HCT116 (cell line): ENCODE measurements at regions of chr3 and their contacts with region 1.

Region 1: DNA sequence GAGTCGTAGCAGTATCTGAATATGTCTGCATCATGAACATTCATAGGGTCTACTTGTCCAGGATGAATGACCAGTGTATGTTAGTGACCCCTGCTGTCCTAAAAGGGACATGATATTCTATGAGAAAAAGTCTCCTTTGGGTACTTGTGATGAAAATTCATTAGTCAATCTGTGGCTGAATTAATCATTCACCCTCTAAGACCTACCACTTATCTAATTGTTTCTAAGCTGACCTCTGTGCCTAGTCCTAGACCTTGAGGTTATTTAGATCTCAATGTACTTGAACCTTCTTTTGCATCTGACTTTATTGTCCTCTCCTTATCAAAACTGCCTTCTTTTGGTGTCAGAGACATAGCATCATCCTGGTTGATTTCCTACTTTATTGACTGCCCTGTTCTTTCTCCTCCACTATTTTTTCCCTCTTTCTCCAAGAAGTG is 799.3 kb downstream of the DIPK2A start:
- DNase-seq: peak; percentile 24
- ATAC-seq: peak; percentile 72
- H3K4me3 ChIP-seq: no peak overlapping the region
- H3K27ac ChIP-seq: no peak overlapping the region
- H3K4me1 ChIP-seq: no peaks in the 10 kb centered on the region
- H3K27me3 ChIP-seq: no peaks in the 10 kb centered on the region
- CTCF ChIP-seq: peak; percentile 24 to 48 (median 36); a peak in 4 of 6 replicates
- POLR2A ChIP-seq: no peak
- RAD21 ChIP-seq: peak; percentile 65

Region 2: DNA sequence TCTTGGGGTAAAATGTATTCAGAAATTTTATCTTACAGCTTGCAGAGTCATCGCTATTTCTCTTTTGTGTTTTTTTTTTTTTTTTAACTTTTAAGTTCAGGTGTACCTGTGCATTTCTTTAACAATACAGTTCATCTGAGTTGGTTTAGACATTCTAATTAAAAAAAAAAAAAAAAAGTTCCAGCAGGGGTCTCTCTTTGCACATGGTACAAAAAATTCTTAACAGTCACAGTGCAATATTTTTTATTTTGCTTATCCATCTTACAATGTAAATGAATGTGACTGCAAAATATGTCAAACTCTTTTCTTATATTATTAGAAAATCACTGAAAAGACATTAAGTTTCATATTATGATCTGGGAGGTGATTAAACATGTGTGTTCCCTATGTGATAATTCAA is 875.1 kb before region 1 on chr3:
- CTCF ChIA-PET with region 1: no interaction called
- POLR2A ChIA-PET with region 1: no interaction called
- RAD21 ChIA-PET with region 1: no interaction called
- intact Hi-C with region 1: loop called (anchors 5 kb)
- DNase-seq: no peak
- ATAC-seq: 0 out of 2 replicates have a peak, but pooled peaks have one; percentile 30
- H3K4me3 ChIP-seq: no peak overlapping the region
- H3K27ac ChIP-seq: no peak overlapping the region
- H3K4me1 ChIP-seq: no peaks in the 10 kb centered on the region
- H3K27me3 ChIP-seq: no peaks in the 10 kb centered on the region
- CTCF ChIP-seq: peak in 2 of 3 experiments; percentile 28 to 39; a peak in 3 of 6 replicates
- POLR2A ChIP-seq: no peak
- RAD21 ChIP-seq: peak; percentile 56

Region 3: GRCh38 chr3:143972505-143973255 is 798.3 kb before region 1 on chr3:
- CTCF ChIA-PET with region 1: interaction called, 4 read pairs
- POLR2A ChIA-PET with region 1: interaction called, 3 read pairs
- RAD21 ChIA-PET with region 1: no interaction called
- intact Hi-C with region 1: loop called (anchors 2 kb)
- DNase-seq: peak; percentile 15
- ATAC-seq: peak; percentile 28
- H3K4me3 ChIP-seq: peak overlapping the region; percentile 82 to 91
- H3K27ac ChIP-seq: peak overlapping the region; percentile 90
- H3K4me1 ChIP-seq: peaks cover 7 to 17% of the 10 kb centered on the region in 2 experiments; a peak in 3 of 4 replicates
- H3K27me3 ChIP-seq: no peaks in the 10 kb centered on the region
- CTCF ChIP-seq: peak; percentile 27 to 43 (median 37); a peak in 2 of 6 replicates
- POLR2A ChIP-seq: no peak
- RAD21 ChIP-seq: no peak

Region 4: GRCh38 chr3:145058483-145058882 is 287.6 kb after region 1 on chr3:
- CTCF ChIA-PET with region 1: no interaction called
- POLR2A ChIA-PET with region 1: no interaction called
- RAD21 ChIA-PET with region 1: no interaction called
- intact Hi-C with region 1: no loop called
- DNase-seq: no peak
- ATAC-seq: no peak
- H3K4me3 ChIP-seq: no peak overlapping the region
- H3K27ac ChIP-seq: no peak overlapping the region
- H3K4me1 ChIP-seq: no peaks in the 10 kb centered on the region
- H3K27me3 ChIP-seq: no peaks in the 10 kb centered on the region
- CTCF ChIP-seq: no peak
- POLR2A ChIP-seq: no peak
- RAD21 ChIP-seq: no peak